Mammary epithelial cell (primary cell): ENCODE measurements at regions of chr2 and their contacts with region 1.

Region 1: DNA sequence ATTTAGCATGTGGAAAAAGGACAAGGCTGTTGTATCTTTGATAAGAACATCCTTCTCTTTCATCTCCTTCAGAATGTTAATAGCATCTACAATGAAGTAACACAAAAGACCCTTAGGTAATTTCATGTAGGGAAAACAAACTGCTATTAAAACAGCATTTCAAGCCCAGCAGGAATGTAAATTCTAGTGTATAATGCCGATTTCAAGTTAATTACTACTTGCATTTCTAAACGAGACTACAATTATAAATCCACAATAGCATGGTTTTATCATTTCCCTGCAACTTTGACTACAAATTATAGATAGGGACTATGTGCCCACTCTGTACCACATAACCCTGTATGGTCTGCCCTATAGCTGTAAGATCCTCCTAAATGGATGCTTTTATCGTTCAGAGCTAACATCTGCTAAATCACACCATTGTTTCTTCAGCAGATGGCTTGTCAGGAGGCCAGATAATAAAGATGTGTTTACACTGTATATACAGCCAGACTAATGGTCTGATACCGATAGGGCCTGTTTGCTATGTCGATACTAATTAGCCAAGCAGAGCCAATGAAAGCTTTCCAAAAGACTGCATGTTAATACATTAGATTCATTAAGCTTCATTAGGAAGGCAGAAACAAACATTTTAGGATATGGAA is 51.9 kb downstream of the LRPPRC start:
- DNase-seq: no peak
- H3K4me3 ChIP-seq: no peak overlapping the region
- H3K27ac ChIP-seq: no peak overlapping the region
- H3K4me1 ChIP-seq: no peaks in the 10 kb centered on the region
- H3K27me3 ChIP-seq: no peaks in the 10 kb centered on the region
- CTCF ChIP-seq: no peak

Region 2: GRCh38 chr2:42895134-42895790 is 1048.7 kb before region 1 on chr2:
- CTCF ChIA-PET with region 1: no interaction called
- dilution Hi-C with region 1: no loop called
- in situ Hi-C with region 1: no loop called
- intact Hi-C with region 1: loop called (anchors 5 kb)
- DNase-seq: no peak
- H3K4me3 ChIP-seq: no peak overlapping the region
- H3K27ac ChIP-seq: no peak overlapping the region
- H3K4me1 ChIP-seq: peaks cover 6% of the 10 kb centered on the region
- H3K27me3 ChIP-seq: no peaks in the 10 kb centered on the region
- CTCF ChIP-seq: no peak

Region 3: DNA sequence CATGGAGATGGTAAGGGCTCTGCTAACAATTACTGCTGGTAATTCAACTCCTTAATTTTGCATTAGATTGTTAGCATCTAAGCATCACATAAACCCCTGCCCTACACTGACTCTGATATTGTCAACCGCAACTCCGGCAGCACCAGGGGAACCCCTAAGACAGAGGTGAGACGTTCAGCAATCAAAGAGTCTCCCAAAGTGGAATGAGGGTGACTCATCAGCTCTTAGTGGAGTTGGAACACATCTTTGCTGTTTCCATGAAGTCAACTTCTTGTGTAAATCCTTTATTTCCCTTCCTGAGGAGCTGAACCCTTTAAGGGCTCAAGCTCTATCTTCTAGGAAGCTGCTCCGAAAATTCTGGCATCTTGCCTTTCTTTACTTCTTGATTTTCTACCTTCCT is 53.1 kb before region 1 on chr2:
- CTCF ChIA-PET with region 1: no interaction called
- dilution Hi-C with region 1: loop called (anchors 5 kb)
- in situ Hi-C with region 1: no loop called
- intact Hi-C with region 1: no loop called
- DNase-seq: peak; percentile 9
- H3K4me3 ChIP-seq: no peak overlapping the region
- H3K27ac ChIP-seq: no peak overlapping the region
- H3K4me1 ChIP-seq: no peaks in the 10 kb centered on the region
- H3K27me3 ChIP-seq: no peaks in the 10 kb centered on the region
- CTCF ChIP-seq: no peak

Region 4: GRCh38 chr2:43977677-43978375 is 33.9 kb after region 1 on chr2:
- CTCF ChIA-PET with region 1: no interaction called
- dilution Hi-C with region 1: loop called (anchors 5 kb)
- in situ Hi-C with region 1: no loop called
- intact Hi-C with region 1: loop called (anchors 5 kb)
- DNase-seq: no peak
- H3K4me3 ChIP-seq: no peak overlapping the region
- H3K27ac ChIP-seq: no peak overlapping the region
- H3K4me1 ChIP-seq: no peaks in the 10 kb centered on the region
- H3K27me3 ChIP-seq: no peaks in the 10 kb centered on the region
- CTCF ChIP-seq: no peak

Region 5: DNA sequence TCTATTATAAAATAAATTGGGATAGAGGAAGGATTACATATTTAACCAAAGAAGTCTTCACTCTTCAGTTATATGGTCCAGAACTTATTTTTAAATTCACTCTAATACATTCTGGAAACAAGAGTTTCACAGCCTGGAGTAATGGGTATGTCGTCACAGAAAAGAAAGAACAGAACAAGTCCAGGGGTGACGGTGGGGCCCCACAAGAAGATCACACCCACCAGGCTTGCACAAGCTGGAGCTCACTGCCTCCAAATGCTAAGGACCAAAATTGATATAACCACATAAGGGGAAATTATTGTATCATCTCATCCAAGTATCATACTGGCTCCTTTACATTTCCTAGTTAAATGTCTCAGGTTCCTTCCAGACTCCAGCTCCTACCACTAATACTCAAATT is 40.6 kb after region 1 on chr2:
- CTCF ChIA-PET with region 1: no interaction called
- dilution Hi-C with region 1: loop called (anchors 5 kb)
- in situ Hi-C with region 1: no loop called
- intact Hi-C with region 1: loop called (anchors 5 kb)
- DNase-seq: no peak
- H3K4me3 ChIP-seq: no peak overlapping the region
- H3K27ac ChIP-seq: no peak overlapping the region
- H3K4me1 ChIP-seq: no peaks in the 10 kb centered on the region
- H3K27me3 ChIP-seq: no peaks in the 10 kb centered on the region
- CTCF ChIP-seq: no peak